Motor neuron (in vitro differentiated cells): ENCODE measurements at regions of chr1 and their contacts with region 1.

Region 1: GRCh38 chr1:33633019-33633801 is 160.8 kb downstream of the ZSCAN20 start:
- ATAC-seq: peak; percentile 88 to 98 (median 96)
- H3K4me3 ChIP-seq: no peak overlapping the region
- H3K27ac ChIP-seq: no peak overlapping the region
- H3K4me1 ChIP-seq: no peaks in the 10 kb centered on the region

Region 2: DNA sequence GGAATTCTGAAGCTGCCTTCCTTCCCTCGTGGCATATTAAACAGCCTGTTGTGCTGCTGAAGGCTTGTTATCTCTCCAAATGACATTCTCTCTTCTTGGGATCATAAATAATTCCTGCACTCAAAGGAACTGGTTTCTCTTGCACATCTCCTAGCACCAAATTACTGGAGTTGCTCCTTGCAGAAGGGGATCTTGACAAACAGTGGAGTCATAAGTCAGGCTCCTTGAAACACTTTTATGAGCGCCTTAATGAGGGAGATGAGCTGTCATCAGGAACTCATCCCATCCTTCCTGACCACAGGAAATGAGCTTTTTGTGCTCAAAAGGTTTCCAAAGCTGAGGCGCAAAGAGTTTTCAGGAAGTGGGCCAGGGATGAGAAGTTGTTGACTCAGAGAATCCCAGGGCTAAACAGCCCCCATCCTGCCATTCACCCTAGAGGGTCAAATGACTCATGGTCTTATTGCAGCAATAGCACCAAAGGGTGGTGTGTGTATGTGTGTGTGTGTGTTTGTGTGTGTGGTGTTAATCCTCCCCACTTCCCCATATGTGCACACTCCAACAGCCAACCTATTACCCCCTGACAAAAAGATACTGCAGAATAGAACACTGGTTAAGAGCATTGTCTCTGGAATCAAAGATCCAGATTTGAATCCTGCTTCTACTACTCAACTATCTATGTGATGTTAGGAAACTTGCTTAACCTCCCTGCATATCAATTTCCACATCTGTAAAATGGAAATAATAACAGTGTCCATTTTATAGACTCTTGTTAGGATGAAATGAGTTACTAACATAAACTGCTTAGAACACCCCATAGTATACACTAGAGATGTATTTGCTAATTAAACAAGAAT is 199.5 kb before region 1 on chr1:
- in situ Hi-C with region 1: no loop called
- ATAC-seq: no peak
- H3K4me3 ChIP-seq: no peak overlapping the region
- H3K27ac ChIP-seq: no peak overlapping the region
- H3K4me1 ChIP-seq: peaks cover 63 to 64% of the 10 kb centered on the region in 2 donors

Region 3: DNA sequence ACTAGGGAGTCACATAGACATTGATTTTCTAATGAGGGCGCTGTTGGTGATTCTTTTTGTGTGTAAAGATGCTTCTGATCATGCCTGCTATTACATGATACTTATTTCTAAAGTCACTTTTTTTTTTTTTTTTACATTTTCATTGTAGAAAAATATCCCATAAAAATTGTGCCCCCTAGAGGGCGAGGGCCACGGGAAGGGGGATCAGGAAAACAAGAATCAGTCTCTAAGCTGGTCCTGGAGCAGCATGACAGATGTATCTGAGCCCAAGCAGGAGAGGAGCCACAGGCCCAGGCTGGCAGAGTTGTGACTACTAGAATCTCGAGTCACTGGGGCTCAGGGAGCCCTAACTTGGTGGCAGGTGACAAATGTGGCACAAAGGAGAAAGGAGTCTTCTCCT is 132.7 kb before region 1 on chr1:
- in situ Hi-C with region 1: no loop called
- ATAC-seq: no peak
- H3K4me3 ChIP-seq: no peak overlapping the region
- H3K27ac ChIP-seq: no peak overlapping the region
- H3K4me1 ChIP-seq: no peaks in the 10 kb centered on the region

Region 4: DNA sequence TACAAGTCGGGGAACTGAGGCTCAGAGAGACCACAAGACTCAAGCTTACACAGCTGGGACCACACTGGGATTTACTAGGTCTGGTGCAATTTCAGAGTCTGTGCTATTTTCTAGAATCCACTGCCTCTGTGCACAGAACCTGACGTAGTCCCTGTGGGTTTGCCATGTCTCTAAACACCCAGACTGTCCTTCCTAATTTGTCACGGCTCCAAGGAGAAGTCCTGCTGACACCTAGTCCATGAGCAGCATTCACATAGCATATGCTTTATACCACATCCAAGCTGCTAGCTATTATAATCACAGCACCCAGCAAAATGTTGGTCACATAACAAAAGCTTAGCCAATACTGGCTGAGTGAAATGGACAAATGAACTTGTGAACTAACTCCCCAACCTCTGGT is 151.7 kb after region 1 on chr1:
- in situ Hi-C with region 1: no loop called
- ATAC-seq: no peak
- H3K4me3 ChIP-seq: no peak overlapping the region
- H3K27ac ChIP-seq: no peak overlapping the region
- H3K4me1 ChIP-seq: no peaks in the 10 kb centered on the region

Region 5: GRCh38 chr1:34162852-34163766 is 529.9 kb after region 1 on chr1:
- in situ Hi-C with region 1: loop called in 3 of 9 experiments (anchors 25 kb)
- ATAC-seq: peak; percentile 84 to 88 (median 88)
- H3K4me3 ChIP-seq: peak overlapping the region in 4 of 5 donors; percentile 50 to 59 (median 50)
- H3K27ac ChIP-seq: no peak overlapping the region
- H3K4me1 ChIP-seq: peaks cover 0 to 16% of the 10 kb centered on the region in 2 donors

Region 6: GRCh38 chr1:34597877-34598514 is 964.8 kb after region 1 on chr1:
- in situ Hi-C with region 1: loop called in 4 of 9 experiments (anchors 25 kb)
- ATAC-seq: peak; percentile 92 to 100 (median 98)
- H3K4me3 ChIP-seq: no peak overlapping the region
- H3K27ac ChIP-seq: no peak overlapping the region
- H3K4me1 ChIP-seq: no peaks in the 10 kb centered on the region

Region 7: GRCh38 chr1:34612091-34612827 is 979.0 kb after region 1 on chr1:
- in situ Hi-C with region 1: loop called in 1 of 9 experiments (anchors 25 kb)
- ATAC-seq: peak in 5 of 8 experiments; percentile 31 to 73 (median 60)
- H3K4me3 ChIP-seq: no peak overlapping the region
- H3K27ac ChIP-seq: no peak overlapping the region
- H3K4me1 ChIP-seq: peaks cover 0 to 18% of the 10 kb centered on the region in 2 donors

Region 8: GRCh38 chr1:34742667-34743270 is 1109.6 kb after region 1 on chr1:
- in situ Hi-C with region 1: loop called in 4 of 9 experiments (anchors 25 kb)
- ATAC-seq: peak; percentile 78 to 100 (median 93)
- H3K4me3 ChIP-seq: no peak overlapping the region
- H3K27ac ChIP-seq: no peak overlapping the region
- H3K4me1 ChIP-seq: peaks cover 0 to 13% of the 10 kb centered on the region in 2 donors